ENCODE measurements at regions of chr2 and their contacts with region 1.

Region 1: GRCh38 chr2:168346725-168347477 is 99.5 kb upstream of the STK39 start:
- DNase-seq: peak; percentile 75
- H3K4me3 Mint-ChIP-seq: peak overlapping the region; percentile 75
- H3K27ac Mint-ChIP-seq: peak overlapping the region; percentile 65
- H3K4me1 Mint-ChIP-seq: peaks cover 14% of the 10 kb centered on the region
- H3K27me3 Mint-ChIP-seq: no peaks in the 10 kb centered on the region
- CTCF ChIP-seq: peak; percentile 83

Region 2: DNA sequence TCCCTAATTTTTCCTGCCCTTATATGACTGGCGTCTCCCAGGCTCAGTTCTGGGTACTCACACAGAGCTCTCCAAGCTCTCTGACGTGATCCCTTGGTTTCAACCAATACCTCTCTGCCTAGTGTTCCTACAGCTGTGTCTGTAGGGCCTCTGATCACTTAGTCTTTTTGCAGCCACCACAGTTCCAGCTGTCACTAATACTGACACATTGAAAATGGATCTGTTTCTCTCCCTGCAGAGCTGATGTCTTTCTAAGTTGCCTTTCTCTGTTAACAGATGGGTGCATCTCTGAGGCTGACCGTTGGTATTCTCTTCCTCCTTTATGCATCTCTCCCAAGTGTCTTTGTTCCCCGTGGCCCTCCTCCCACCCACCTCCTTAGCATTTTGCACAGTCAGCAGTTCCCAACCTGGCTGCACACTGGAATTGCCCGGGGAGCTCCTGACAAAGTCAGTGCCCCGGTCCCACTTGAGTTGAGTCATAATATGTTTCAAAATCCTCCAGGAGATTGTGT is 171.7 kb after region 1 on chr2:
- CTCF ChIA-PET with region 1: no interaction called
- POLR2A ChIA-PET with region 1: no interaction called
- intact Hi-C with region 1: no loop called
- DNase-seq: peak; percentile 84
- H3K4me3 Mint-ChIP-seq: peak overlapping the region; percentile 27
- H3K27ac Mint-ChIP-seq: peak overlapping the region; percentile 60
- H3K4me1 Mint-ChIP-seq: peaks cover 51% of the 10 kb centered on the region
- H3K27me3 Mint-ChIP-seq: no peaks in the 10 kb centered on the region
- CTCF ChIP-seq: no peak

Region 3: GRCh38 chr2:168687314-168687713 is 340.4 kb after region 1 on chr2:
- CTCF ChIA-PET with region 1: interaction called, 50 read pairs
- POLR2A ChIA-PET with region 1: no interaction called
- intact Hi-C with region 1: loop called (anchors 1 kb)
- DNase-seq: peak; percentile 34
- H3K4me3 Mint-ChIP-seq: no peak overlapping the region
- H3K27ac Mint-ChIP-seq: no peak overlapping the region
- H3K4me1 Mint-ChIP-seq: peaks cover 10% of the 10 kb centered on the region
- H3K27me3 Mint-ChIP-seq: no peaks in the 10 kb centered on the region
- CTCF ChIP-seq: peak; percentile 13

Region 4: DNA sequence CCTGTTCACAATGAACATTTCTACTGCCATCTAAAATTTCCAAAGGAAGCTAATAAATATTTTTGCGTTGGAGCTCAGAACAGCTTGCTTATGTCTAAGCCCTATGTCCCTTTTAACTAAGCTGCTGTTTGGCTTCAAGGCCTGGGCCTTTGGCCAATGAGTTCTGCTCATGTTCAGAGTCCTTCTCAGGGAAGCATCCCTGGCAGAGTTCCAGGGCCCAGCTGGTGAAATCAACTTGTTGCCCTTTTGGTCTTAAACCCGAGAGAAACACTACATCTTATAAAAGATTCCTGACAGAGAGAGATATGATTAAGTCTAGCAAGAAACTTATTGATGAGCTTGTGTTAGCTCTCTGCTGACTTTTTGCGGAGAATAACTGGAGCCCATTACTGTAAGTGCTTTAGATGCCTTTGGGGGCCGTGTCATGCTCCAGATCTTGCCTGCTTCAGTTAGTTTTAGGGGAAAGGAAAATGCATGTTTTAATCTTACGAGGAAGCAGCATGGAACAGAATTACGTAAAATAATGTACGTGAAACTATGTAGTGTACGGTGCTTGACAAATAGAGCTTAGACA is 353.0 kb after region 1 on chr2:
- CTCF ChIA-PET with region 1: interaction called, 9 read pairs
- POLR2A ChIA-PET with region 1: no interaction called
- intact Hi-C with region 1: loop called (anchors 1 kb)
- DNase-seq: peak; percentile 43
- H3K4me3 Mint-ChIP-seq: no peak overlapping the region
- H3K27ac Mint-ChIP-seq: no peak overlapping the region
- H3K4me1 Mint-ChIP-seq: peaks cover 18% of the 10 kb centered on the region
- H3K27me3 Mint-ChIP-seq: no peaks in the 10 kb centered on the region
- CTCF ChIP-seq: no peak

Region 5: DNA sequence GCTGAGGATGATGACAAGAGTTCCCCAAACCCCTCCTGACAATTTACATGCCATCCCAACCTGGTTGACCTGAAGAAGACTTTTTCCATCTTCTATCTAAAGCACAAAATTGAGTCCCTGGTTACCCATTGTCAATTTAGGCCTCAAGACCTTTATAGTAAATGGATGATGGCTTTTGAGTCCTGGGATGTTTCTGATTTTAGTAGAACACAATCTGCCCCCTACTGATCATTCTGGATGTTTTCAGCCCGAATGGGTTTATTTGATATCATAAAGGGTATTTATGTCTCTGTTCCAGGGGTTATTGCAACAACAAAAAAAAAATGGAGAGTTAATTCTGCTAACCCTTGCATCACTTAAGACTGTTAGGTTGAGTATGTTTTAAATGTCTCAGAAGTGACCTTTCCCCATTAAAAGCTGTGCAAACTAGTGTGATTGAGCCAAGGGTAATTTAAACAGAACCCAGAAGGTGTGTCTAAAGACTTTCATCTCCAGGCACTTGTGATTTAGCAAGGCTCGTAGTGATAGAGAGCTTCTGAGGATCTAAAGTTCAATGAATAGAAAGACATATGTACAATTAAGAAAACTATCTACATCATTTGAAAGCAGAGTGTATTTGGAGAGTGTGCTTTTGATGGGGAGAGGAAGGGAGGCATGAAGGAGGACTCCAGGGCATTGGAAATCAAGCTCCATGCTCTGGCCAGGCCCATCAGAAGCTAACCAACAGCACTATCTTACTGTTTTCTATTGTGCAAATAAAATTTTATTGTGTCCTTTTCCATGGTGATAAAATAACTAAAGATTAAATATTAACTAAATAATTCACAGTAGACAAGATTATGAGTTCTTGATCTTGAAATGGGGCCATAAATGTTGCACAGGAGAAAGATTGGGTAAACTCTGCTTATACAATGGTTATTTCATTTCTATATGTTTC is 358.9 kb after region 1 on chr2:
- CTCF ChIA-PET with region 1: interaction called, 6 read pairs
- POLR2A ChIA-PET with region 1: interaction called, 3 read pairs
- intact Hi-C with region 1: loop called (anchors 1 kb)
- DNase-seq: peak; percentile 43
- H3K4me3 Mint-ChIP-seq: no peak overlapping the region
- H3K27ac Mint-ChIP-seq: peak overlapping the region; percentile 33
- H3K4me1 Mint-ChIP-seq: peaks cover 6% of the 10 kb centered on the region
- H3K27me3 Mint-ChIP-seq: no peaks in the 10 kb centered on the region
- CTCF ChIP-seq: peak; percentile 33

Region 6: DNA sequence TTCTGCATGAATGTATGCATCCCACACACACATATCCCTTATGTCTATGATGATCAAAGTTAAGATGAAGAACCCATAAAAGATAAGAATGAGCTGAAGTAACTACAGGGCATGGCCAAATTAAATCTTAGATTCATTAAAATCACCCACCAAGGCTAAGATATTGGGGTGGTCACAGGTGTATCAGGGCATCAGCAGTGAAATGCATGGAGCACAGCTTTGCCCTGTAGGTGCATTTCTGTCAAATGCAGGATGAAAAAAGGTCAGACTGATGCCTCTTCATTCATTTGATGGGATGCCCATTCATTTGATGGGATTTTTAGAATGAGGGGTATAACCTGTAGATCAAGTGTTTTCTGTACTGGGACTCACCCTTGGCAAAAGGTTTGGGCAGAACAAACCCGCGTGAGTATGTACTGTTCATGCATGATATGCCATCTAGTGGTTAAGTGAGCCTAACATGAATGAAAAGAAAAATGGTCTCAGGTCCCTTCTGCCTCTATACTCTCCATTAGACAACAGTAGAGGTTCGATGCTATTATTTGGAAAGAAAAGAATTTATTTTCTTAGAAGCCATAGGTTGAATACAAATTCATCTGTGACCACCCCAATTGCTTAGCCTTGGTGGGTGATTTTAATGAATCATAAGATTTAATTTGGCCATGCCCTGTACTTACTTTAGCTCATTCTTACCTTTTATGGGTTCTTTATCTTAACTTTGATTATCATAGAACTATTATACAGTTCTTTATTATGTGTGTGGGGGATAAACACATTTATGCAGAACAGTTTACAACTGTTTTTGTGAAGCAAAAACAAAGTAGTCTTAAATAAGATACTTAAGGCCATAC is 412.3 kb after region 1 on chr2:
- CTCF ChIA-PET with region 1: interaction called, 66 read pairs
- POLR2A ChIA-PET with region 1: no interaction called
- intact Hi-C with region 1: loop called (anchors 1 kb)
- DNase-seq: peak; percentile 67
- H3K4me3 Mint-ChIP-seq: no peak overlapping the region
- H3K27ac Mint-ChIP-seq: no peak overlapping the region
- H3K4me1 Mint-ChIP-seq: no peaks in the 10 kb centered on the region
- H3K27me3 Mint-ChIP-seq: no peaks in the 10 kb centered on the region
- CTCF ChIP-seq: peak; percentile 62

Region 7: GRCh38 chr2:168920504-168921157 is 573.7 kb after region 1 on chr2:
- CTCF ChIA-PET with region 1: interaction called, 20 read pairs
- POLR2A ChIA-PET with region 1: no interaction called
- intact Hi-C with region 1: loop called (anchors 1 kb)
- DNase-seq: peak; percentile 56
- H3K4me3 Mint-ChIP-seq: no peak overlapping the region
- H3K27ac Mint-ChIP-seq: no peak overlapping the region
- H3K4me1 Mint-ChIP-seq: no peaks in the 10 kb centered on the region
- H3K27me3 Mint-ChIP-seq: peaks cover 61% of the 10 kb centered on the region
- CTCF ChIP-seq: peak; percentile 70